AG04449 (cell line): ENCODE measurements at regions of chr1 and their contacts with region 1.

Region 1: DNA sequence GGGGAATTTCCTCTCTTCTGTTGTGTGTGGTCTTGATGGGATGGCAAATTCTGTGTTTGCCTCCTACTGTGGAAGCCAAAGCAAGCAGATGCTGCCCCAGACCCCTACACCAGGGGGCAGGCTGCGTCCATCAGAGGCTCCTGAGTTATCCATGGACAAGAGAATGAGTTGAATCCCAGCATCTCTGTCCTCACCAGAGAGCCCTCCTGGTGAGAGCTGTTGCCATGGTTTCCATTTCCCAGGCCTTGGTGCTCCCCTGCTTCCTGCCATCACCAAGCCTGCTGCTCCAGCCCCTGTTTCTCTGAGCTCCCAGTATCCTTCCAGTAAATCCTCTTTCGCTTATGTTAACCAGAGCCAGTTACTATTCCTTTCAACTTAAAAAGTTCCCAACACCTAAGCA is 20.4 kb upstream of the GNG12 start:
- DNase-seq: no peak
- H3K4me3 ChIP-seq: no peak overlapping the region
- CTCF ChIP-seq: peak; percentile 94

Region 2: GRCh38 chr1:67735806-67736627 is 117.7 kb before region 1 on chr1:
- CTCF ChIA-PET with region 1: no interaction called
- POLR2A ChIA-PET with region 1: no interaction called
- DNase-seq: peak; percentile 82
- H3K4me3 ChIP-seq: no peak overlapping the region; the same call in 1 of the 2 replicates
- CTCF ChIP-seq: no peak

Region 3: DNA sequence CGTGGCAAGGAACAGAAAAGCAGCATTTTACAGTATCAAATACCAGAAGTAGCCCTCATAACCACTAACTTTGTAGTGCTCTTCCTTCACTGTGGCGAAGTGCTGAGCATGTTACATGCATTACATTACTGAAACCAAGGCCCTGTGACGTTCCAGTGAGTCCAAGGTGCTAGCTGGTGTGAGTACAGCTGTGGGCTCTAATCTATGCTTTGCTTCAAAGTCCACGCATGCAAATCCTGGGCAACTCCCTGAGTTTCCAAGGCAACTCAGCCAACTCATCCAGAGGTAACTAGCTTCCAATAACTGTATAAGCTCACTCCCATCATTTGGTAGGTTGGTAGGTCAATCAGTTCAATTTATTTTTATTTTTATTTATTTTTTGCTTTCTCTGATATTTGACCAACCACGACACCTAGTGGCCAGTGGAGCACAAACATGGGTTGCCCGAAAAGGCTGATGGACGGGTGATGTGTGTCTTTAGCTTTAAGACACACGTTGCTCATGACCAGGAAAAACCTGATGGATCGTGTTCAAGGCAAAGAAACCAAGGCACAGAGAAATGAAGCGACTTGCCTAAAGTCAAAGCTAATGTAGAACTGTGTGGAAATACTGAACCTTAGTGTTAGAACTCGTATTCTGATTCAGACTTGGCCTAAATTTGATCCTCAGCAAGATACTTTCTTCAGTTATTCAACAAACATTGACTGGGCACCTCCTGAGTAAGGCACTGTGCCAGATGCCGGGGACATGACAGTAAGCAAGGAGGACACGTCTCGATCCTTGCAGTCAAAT is 93.5 kb before region 1 on chr1:
- CTCF ChIA-PET with region 1: interaction called, 96 read pairs
- POLR2A ChIA-PET with region 1: no interaction called
- DNase-seq: no peak
- H3K4me3 ChIP-seq: no peak overlapping the region
- CTCF ChIP-seq: peak; percentile 59

Region 4: GRCh38 chr1:67785847-67786753 is 67.6 kb before region 1 on chr1:
- CTCF ChIA-PET with region 1: interaction called, 10 read pairs
- POLR2A ChIA-PET with region 1: no interaction called
- DNase-seq: no peak
- H3K4me3 ChIP-seq: no peak overlapping the region
- CTCF ChIP-seq: no peak

Region 5: GRCh38 chr1:67838180-67838910 is 15.4 kb before region 1 on chr1:
- CTCF ChIA-PET with region 1: interaction called, 21 read pairs
- POLR2A ChIA-PET with region 1: no interaction called
- DNase-seq: no peak
- H3K4me3 ChIP-seq: no peak overlapping the region
- CTCF ChIP-seq: no peak

Region 6: DNA sequence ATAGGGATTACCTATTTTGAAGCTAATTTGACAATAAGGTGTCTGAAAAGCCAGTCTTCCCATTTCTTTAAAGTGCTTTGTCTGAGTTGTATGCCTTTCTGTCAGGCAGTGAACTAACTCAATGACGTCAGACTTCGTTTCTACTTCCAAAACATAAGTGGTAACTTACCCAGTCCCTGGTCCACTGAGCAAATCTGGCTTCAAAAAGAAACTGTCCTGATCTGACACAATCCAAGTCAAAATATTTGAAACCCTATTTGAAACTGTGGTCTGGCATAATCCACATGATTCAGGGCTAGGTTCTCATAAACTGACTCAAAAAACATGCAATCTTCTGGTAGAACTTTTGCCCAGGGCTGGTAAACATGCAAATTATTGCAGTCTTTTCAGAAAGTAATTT is 162.7 kb after region 1 on chr1:
- CTCF ChIA-PET with region 1: interaction called, 211 read pairs
- POLR2A ChIA-PET with region 1: no interaction called
- DNase-seq: no peak
- H3K4me3 ChIP-seq: no peak overlapping the region
- CTCF ChIP-seq: no peak

Region 7: GRCh38 chr1:68093737-68094136 is 240.0 kb after region 1 on chr1:
- CTCF ChIA-PET with region 1: interaction called, 21 read pairs
- POLR2A ChIA-PET with region 1: no interaction called
- DNase-seq: no peak
- H3K4me3 ChIP-seq: no peak overlapping the region
- CTCF ChIP-seq: no peak